Prostate gland (tissue), 2 donors: ENCODE measurements at regions of chr1 and their contacts with region 1.

Region 1: GRCh38 chr1:219555031-219555692 is 57.7 kb downstream of the ZC3H11B start:
- DNase-seq: peak; percentile 7
- H3K4me3 ChIP-seq: no peak overlapping the region
- H3K27ac ChIP-seq: peak overlapping the region; percentile 45 to 59
- H3K4me1 ChIP-seq: peaks cover 5% of the 10 kb centered on the region
- H3K27me3 ChIP-seq: no peaks in the 10 kb centered on the region
- CTCF ChIP-seq: no peak
- POLR2A ChIP-seq: no peak

Region 2: GRCh38 chr1:218823291-218823900 is 731.8 kb before region 1 on chr1:
- intact Hi-C with region 1: loop called (anchors 10 kb)
- DNase-seq: no peak
- H3K4me3 ChIP-seq: no peak overlapping the region
- H3K27ac ChIP-seq: no peak overlapping the region
- H3K4me1 ChIP-seq: no peaks in the 10 kb centered on the region
- H3K27me3 ChIP-seq: no peaks in the 10 kb centered on the region
- CTCF ChIP-seq: no peak
- POLR2A ChIP-seq: no peak

Region 3: DNA sequence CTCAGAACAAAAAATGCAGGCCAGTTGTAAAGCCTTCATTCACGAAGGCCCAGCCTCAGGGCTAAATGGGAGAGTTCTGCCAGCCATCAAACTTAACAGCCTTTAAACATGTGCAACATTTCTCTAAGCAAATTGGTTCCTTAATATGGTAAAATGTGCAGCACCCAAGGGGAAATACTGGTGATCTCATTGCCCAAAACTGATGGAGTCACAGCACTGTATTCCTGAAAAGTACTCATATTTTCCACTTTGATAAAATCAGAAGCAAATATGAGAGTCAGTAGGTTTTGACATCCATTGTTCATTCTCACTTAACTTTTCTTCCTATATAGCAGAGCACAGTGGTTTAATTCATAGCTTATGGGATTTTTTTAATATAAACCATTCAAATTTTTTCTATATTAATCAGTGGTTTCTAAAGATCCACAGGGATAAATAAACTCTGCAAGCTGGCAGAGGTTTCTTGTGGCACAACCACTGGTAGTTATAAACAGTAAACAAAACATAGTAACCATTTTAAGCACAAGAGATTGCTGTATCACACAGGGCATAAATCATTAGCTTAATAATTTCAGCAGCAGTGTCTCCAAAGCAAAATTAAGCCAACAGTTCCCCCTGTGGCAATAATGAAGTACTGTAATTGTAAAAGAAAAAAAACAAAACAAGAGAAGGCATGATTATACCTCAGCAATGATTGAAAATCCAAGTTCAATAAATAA is 488.4 kb before region 1 on chr1:
- intact Hi-C with region 1: loop called (anchors 10 kb)
- DNase-seq: no peak
- H3K4me3 ChIP-seq: no peak overlapping the region
- H3K27ac ChIP-seq: no peak overlapping the region
- H3K4me1 ChIP-seq: no peaks in the 10 kb centered on the region
- H3K27me3 ChIP-seq: no peaks in the 10 kb centered on the region
- CTCF ChIP-seq: peak in 3 of 4 experiments; percentile 30 to 53 (median 37)
- POLR2A ChIP-seq: no peak

Region 4: GRCh38 chr1:219298571-219299148 is 256.5 kb before region 1 on chr1:
- intact Hi-C with region 1: loop called (anchors 10 kb)
- DNase-seq: no peak
- H3K4me3 ChIP-seq: no peak overlapping the region
- H3K27ac ChIP-seq: peak overlapping the region; percentile 53 to 56
- H3K4me1 ChIP-seq: no peaks in the 10 kb centered on the region
- H3K27me3 ChIP-seq: no peaks in the 10 kb centered on the region
- CTCF ChIP-seq: no peak
- POLR2A ChIP-seq: no peak

Region 5: GRCh38 chr1:219340796-219341195 is 214.4 kb before region 1 on chr1:
- intact Hi-C with region 1: no loop called
- DNase-seq: no peak
- H3K4me3 ChIP-seq: no peak overlapping the region
- H3K27ac ChIP-seq: no peak overlapping the region
- H3K4me1 ChIP-seq: no peaks in the 10 kb centered on the region
- H3K27me3 ChIP-seq: no peaks in the 10 kb centered on the region
- CTCF ChIP-seq: no peak
- POLR2A ChIP-seq: no peak

Region 6: GRCh38 chr1:219507437-219507836 is 47.7 kb before region 1 on chr1:
- intact Hi-C with region 1: no loop called
- DNase-seq: no peak
- H3K4me3 ChIP-seq: no peak overlapping the region
- H3K27ac ChIP-seq: no peak overlapping the region
- H3K4me1 ChIP-seq: no peaks in the 10 kb centered on the region
- H3K27me3 ChIP-seq: no peaks in the 10 kb centered on the region
- CTCF ChIP-seq: no peak
- POLR2A ChIP-seq: no peak